ENCODE measurements at regions of chr9 and their contacts with region 1.

Region 1: GRCh38 chr9:19456996-19457692 is 48.3 kb downstream of the ACER2 start:
- DNase-seq: peak in 7 of 10 donors; percentile 33 to 93 (median 66)

Region 2: DNA sequence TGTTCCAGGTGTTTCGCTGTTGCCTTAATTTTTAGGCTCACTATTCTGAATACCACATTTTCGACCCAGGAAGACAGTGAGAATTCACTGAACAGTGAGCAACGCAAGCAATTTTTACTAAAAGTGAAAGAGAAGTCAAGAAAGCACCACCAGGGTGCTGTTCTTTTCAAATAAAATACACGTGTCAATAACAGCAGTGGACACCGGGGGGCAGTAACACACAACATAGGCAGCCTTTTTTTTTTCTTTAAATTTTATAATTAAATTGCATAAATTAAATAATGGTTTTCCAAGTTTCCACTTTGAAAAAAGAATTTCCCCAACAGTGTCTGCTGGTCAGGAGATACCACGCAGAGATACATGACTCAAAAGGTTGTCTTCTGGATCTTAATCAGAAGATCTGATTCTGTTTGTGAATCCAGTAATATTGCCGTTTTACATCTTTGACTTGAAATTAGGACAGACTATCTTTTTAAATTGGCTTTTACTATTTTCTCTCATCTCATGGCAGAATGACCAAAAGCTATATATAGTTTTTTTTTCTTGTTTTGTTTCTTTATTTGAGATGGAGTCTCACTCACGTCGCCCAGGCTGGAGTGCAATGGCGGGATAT is 1925.4 kb before region 1 on chr9:
- intact Hi-C with region 1: loop called (anchors 10 kb)
- DNase-seq: peak in 5 of 10 donors; percentile 22 to 81 (median 23)

Region 3: DNA sequence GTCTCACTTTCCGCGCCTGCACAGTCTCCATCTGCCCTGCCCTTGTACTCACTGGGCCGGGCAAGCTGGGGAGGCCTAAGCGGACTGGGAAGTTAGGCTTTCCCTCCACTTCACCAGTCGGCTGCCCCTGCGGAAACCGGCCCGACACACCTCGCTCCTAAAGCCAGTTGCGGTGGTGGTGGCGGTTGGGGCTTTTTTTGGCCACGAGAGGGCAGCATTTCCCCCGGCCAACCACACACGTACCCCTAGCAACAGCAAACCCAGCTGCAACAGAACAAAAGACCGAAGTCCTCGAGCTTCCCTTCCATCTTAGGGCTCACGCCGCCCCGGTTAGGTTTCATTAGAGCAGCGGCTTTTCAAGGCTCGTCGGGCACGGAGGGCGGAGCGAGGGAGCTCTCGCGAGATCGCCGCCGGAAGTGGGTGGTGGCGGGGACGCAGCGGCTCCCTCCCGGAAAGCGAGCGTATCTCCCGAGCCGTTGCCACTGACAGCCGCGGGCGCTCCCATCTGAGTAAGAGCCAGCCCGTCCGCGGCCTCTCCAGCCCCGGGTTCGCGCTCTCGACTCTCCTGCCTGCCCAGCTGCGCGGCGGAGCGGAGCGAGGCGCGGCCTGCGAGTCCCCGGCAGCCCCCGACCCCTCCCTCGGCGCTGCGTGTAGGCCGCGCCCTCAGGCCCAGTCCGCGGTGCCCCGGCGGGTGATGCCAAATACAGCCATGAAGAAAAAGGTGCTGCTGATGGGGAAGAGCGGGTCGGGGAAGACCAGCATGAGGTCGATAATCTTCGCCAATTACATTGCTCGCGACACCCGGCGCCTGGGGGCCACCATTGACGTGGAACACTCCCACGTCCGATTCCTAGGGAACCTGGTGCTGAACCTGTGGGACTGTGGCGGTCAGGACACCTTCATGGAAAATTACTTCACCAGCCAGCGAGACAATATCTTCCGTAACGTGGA is 407.9 kb before region 1 on chr9 and contains the start of gene RRAGA:
- intact Hi-C with region 1: loop called (anchors 1 kb)
- DNase-seq: peak; percentile 87 to 99 (median 93)

Region 4: GRCh38 chr9:19358701-19359100 is 98.4 kb before region 1 on chr9:
- intact Hi-C with region 1: no loop called
- DNase-seq: no peak

Region 5: DNA sequence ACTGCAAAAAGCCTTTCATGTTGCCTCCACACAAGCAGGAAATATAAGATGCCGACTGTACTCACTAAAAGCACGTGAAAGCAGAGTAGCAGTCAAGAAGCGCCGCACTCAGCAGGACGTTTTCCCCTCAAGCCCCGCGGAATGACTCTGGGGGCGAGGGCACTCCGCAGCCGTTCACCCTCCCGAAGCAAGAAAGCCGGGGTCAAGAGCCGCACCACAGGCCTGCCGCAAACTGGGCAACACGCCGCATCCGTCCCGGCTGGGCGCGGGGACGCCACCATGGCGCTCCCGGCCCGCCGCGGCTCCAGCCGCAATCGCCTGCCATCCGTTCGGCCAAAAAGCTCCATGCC is 77.5 kb before region 1 on chr9:
- intact Hi-C with region 1: loop called (anchors 2 kb)
- DNase-seq: peak in 2 of 10 donors; percentile 15 to 78

Region 6: GRCh38 chr9:19408693-19409400 is 48.3 kb before region 1 on chr9 and contains the start of gene ACER2:
- intact Hi-C with region 1: loop called (anchors 10 kb)
- DNase-seq: peak; percentile 87 to 99 (median 94)

Region 7: DNA sequence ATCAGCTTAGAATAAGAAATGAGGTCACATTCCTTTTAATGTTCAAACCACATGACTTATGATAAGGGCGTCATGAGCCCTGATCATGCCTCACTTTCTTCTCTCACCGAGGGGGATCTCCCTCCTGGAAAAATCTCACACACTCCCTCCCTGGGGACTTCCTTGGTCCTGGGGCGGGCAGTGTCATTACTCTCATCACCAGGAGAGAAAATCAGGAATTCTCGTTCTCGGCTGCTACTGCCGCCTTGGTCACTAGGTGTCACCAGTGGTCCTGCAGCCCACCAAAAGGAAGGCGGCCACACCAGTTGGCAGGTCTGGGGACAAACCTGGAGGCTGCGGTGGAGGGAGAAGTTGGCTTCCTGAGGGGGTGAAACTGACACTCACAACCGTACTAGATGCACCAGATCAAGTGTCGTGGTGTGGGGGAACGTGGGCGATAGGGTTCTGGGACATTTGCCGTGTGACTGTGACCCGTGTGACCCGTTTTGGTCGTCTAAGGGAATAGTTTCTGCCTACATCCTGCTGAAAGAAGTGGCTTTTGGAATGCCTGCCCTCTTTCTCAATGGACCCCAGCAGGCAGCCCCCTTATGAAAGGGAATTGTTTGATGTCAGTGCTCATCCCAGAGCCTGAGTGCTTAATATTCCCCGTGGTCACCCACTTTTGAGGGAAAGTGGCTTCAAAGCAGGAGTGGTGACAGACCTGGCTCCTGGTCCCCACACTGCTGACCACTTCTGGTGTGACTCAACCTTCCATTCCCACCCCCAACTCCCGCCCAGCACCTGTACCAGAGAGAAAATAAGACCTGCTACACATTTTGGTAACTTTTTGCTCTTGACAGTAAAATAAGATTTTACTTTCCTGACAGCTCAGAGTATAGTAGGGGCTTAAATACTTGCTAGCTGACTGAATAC is 14.8 kb after region 1 on chr9:
- intact Hi-C with region 1: no loop called
- DNase-seq: peak; percentile 61 to 97 (median 81)

Measured in posterior cingulate gyrus (tissue), 11 donors.